Endothelial cell of umbilical vein (primary cell): ENCODE measurements at regions of chr16 and their contacts with region 1.

Region 1: GRCh38 chr16:71845639-71846430 is at the start of gene ATXN1L:
- DNase-seq: peak; percentile 71
- H3K4me3 ChIP-seq: peak within 1 kb of the TSS; percentile 70 to 91 (median 83)
- H3K27ac ChIP-seq: peak within 1 kb of the TSS; percentile 88
- H3K4me1 ChIP-seq: peaks cover 12% of the 10 kb centered on the region
- H3K27me3 ChIP-seq: no peaks in the 10 kb centered on the region
- CTCF ChIP-seq: no peak
- POLR2A ChIP-seq: peak; percentile 93
- total RNA-seq, gene ATXN1L: 23.9 and 24.9 TPM in 2 replicates

Region 2: GRCh38 chr16:71645453-71645852 is 200.4 kb before region 1 on chr16:
- CTCF ChIA-PET with region 1: no interaction called
- POLR2A ChIA-PET with region 1: no interaction called
- dilution Hi-C with region 1: no loop called
- intact Hi-C with region 1: no loop called
- DNase-seq: no peak
- H3K4me3 ChIP-seq: no peak overlapping the region
- H3K27ac ChIP-seq: no peak overlapping the region
- H3K4me1 ChIP-seq: no peaks in the 10 kb centered on the region
- H3K27me3 ChIP-seq: no peaks in the 10 kb centered on the region
- CTCF ChIP-seq: peak; percentile 6 to 33
- POLR2A ChIP-seq: no peak

Region 3: GRCh38 chr16:71781741-71782140 is 64.1 kb before region 1 on chr16:
- CTCF ChIA-PET with region 1: no interaction called
- POLR2A ChIA-PET with region 1: no interaction called
- dilution Hi-C with region 1: loop called (anchors 10 kb)
- intact Hi-C with region 1: no loop called
- DNase-seq: no peak
- H3K4me3 ChIP-seq: no peak overlapping the region
- H3K27ac ChIP-seq: no peak overlapping the region
- H3K4me1 ChIP-seq: no peaks in the 10 kb centered on the region
- H3K27me3 ChIP-seq: no peaks in the 10 kb centered on the region
- CTCF ChIP-seq: no peak
- POLR2A ChIP-seq: no peak

Region 4: DNA sequence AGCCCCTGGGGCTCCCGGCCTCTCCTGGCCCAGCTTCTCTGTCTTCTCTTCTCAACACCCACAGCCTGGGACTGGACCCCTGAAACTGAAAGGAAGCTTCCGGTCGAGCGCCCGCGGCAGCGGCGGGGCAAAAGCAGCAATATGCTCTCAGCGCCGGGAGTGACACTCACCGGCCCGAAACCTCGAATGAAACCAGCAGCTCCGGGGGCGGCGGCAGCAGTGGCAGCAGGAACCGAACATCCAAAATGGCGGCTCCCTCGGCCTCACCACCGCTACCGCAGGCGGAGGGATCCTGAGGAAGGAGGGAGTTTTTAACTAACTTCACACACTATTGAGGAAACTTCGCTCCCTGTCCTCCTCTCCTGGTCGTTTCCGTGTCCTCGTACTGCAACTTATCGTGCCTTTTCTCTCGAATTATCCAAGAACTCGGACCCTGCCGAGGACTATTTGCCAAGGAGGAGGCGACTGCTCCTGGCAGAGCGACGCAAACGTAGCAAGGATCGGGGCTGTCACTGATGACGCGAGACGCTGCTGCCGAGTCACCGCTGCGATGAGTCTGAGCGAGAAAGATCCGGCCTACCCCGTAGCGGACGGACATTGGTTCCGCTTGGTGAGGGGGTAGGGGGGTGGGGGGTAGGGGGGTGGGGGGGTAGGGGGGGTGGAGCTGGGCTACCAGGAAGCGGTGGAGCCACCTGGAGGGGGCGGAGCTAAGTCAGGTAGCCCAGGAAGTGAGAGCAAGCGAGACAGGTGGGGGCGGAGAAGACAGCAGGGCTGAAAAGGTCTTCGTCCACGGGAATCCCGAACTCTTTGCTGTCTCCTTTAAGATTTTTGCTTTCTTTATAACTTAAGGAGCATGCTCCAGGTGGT is 37.0 kb before region 1 on chr16 and contains the start of gene AP1G1:
- CTCF ChIA-PET with region 1: no interaction called
- POLR2A ChIA-PET with region 1: no interaction called
- dilution Hi-C with region 1: no loop called
- intact Hi-C with region 1: loop called (anchors 2 kb)
- DNase-seq: peak; percentile 97
- H3K4me3 ChIP-seq: peak within 1 kb of the TSS; percentile 88 to 92 (median 92)
- H3K27ac ChIP-seq: peak within 1 kb of the TSS; percentile 94
- H3K4me1 ChIP-seq: peaks cover 18% of the 10 kb centered on the region
- H3K27me3 ChIP-seq: no peaks in the 10 kb centered on the region
- CTCF ChIP-seq: no peak
- POLR2A ChIP-seq: peak; percentile 87
- total RNA-seq, gene AP1G1: 85.3 and 88.4 TPM in 2 replicates